Calu3 (cell line): ENCODE measurements at regions of chr12 and their contacts with region 1.

Region 1: DNA sequence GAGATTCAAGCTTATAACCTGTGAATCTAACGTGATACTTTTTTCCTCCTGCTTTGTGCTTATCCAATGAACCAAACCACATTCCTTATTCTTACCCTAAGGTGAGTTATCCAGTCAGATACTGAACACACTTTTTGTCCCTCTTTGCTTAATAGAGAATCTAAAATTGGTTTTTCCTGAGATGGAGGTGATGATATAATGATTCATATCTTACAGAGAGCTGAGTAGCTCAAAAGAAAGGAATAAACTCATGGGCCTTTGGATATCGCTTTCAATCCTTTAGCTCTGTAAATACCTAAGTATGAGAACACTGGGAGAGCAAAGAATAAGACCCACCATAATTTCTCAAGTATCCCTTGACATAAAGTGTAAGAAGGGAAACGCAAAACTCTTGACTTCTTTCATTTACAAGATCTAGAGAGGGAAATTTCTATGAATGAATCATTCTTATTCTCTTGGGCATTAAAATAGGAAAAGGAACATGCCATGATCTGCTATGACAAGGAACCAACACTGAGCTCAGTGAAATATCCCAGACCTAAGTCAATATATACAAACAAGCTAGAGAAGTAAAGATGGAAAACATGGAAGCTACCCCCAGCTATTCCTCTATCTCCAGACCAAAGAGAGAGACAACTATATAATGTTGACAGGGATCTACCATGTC is 81.8 kb upstream of the STAC3 start:
- DNase-seq: no peak
- H3K4me3 Mint-ChIP-seq: no peak overlapping the region
- H3K27ac Mint-ChIP-seq: no peak overlapping the region
- H3K4me1 Mint-ChIP-seq: no peaks in the 10 kb centered on the region
- H3K27me3 Mint-ChIP-seq: no peaks in the 10 kb centered on the region
- CTCF ChIP-seq: no peak

Region 2: GRCh38 chr12:57319678-57320469 is 12.9 kb before region 1 on chr12:
- CTCF ChIA-PET with region 1: interaction called, 11 read pairs
- intact Hi-C with region 1: no loop called
- DNase-seq: no peak
- H3K4me3 Mint-ChIP-seq: no peak overlapping the region
- H3K27ac Mint-ChIP-seq: no peak overlapping the region
- H3K4me1 Mint-ChIP-seq: no peaks in the 10 kb centered on the region
- H3K27me3 Mint-ChIP-seq: no peaks in the 10 kb centered on the region
- CTCF ChIP-seq: no peak

Region 3: DNA sequence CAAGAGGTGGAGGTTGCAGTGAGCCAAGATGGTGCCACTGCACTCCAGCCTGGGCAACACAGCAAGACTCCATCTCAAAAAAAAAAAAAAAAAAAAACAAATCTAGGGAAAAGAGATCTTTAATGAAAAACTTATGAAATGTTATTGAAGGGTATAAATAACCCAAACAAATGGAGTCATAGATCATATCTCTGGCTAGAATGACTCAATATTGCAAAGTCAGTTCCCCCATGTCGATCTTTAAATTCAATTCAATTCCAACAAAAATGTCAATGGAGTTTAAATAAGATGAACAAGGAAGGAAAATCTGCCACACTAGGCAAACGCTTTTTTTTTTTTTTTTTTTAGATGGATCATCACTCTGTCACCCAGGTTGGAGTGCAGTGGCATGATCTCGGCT is 19.4 kb after region 1 on chr12:
- CTCF ChIA-PET with region 1: no interaction called
- intact Hi-C with region 1: no loop called
- DNase-seq: no peak
- H3K4me3 Mint-ChIP-seq: no peak overlapping the region
- H3K27ac Mint-ChIP-seq: no peak overlapping the region
- H3K4me1 Mint-ChIP-seq: no peaks in the 10 kb centered on the region
- H3K27me3 Mint-ChIP-seq: no peaks in the 10 kb centered on the region
- CTCF ChIP-seq: no peak

Region 4: DNA sequence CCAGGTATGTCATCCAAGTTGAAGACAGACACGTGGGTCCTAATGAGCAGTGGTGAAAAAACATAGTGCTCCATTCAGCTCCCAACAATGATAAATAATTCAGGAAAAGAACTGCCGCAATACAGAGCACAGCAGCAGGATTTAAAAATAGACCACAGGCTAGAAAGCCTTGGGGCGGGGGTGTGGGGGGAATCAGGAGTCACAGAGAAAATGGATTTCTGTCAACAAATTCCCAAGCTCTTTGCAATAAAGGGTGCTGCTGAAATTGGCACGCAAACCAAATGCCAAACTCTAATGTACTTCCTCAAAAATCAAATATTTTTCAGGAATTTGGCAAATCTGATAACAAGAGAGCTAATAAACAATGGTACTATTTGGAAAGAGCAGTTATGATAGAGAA is 39.5 kb after region 1 on chr12:
- CTCF ChIA-PET with region 1: no interaction called
- intact Hi-C with region 1: no loop called
- DNase-seq: no peak
- H3K4me3 Mint-ChIP-seq: no peak overlapping the region
- H3K27ac Mint-ChIP-seq: no peak overlapping the region
- H3K4me1 Mint-ChIP-seq: no peaks in the 10 kb centered on the region
- H3K27me3 Mint-ChIP-seq: no peaks in the 10 kb centered on the region
- CTCF ChIP-seq: no peak

Region 5: DNA sequence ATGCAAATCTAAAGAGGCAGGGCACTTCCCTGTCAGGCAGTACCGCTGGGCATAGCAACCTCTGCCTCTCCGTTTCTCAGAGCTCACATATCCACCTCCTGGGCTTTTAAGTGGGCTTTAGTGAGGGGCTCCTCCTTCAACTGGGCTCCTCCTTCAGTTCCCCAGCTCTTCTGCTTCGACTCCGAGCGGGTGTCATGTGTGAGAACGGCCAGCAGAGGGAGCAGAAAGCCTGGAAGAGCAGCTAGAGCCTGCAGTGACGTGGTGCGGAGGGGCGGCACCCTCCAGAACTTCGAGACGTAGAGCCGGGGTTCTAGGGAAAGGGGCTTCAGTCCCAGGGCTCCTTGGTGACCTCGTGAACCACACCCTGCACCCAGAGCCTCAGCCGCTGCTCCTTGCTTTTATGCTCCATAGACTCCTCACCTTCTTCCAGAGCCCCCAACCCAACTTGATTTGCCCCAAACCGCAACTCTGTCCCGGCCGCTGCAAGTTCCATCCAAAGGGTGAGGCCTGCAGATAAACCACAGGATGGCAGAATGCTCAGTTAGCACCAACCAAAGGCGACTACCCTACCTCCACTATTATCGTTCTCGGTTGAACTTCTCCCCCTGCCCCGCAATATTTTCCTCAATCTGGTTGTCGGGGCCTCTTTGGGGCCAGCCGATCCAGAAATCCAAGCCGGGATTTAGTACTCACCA is 126.4 kb after region 1 on chr12:
- CTCF ChIA-PET with region 1: no interaction called
- intact Hi-C with region 1: no loop called
- DNase-seq: peak; percentile 96
- H3K4me3 Mint-ChIP-seq: peak overlapping the region; percentile 74
- H3K27ac Mint-ChIP-seq: peak overlapping the region; percentile 96
- H3K4me1 Mint-ChIP-seq: peaks cover 56% of the 10 kb centered on the region
- H3K27me3 Mint-ChIP-seq: peaks cover 46% of the 10 kb centered on the region
- CTCF ChIP-seq: peak; percentile 95